ENCODE measurements at regions of chr19 and their contacts with region 1.

Region 1: GRCh38 chr19:13262450-13262849 is 112.2 kb downstream of the IER2 start:
- DNase-seq: no peak
- H3K4me3 ChIP-seq: no peak overlapping the region
- H3K27ac ChIP-seq: no peak overlapping the region
- H3K4me1 ChIP-seq: peaks cover 4 to 19% (median 6%) of the 10 kb centered on the region in 3 donors
- H3K27me3 ChIP-seq: peaks cover 0 to 3% (median 0%) of the 10 kb centered on the region in 4 donors
- CTCF ChIP-seq: peak in 5 of 6 experiments; percentile 40 to 69 (median 56)
- POLR2A ChIP-seq: no peak

Region 2: GRCh38 chr19:12974301-12975220 is 287.9 kb before region 1 on chr19:
- intact Hi-C with region 1: loop called (anchors 5 kb)
- DNase-seq: no peak
- H3K4me3 ChIP-seq: no peak overlapping the region
- H3K27ac ChIP-seq: no peak overlapping the region
- H3K4me1 ChIP-seq: peaks cover 0 to 9% (median 0%) of the 10 kb centered on the region in 3 donors
- H3K27me3 ChIP-seq: peaks cover 0 to 11% (median 0%) of the 10 kb centered on the region in 4 donors
- CTCF ChIP-seq: no peak
- POLR2A ChIP-seq: no peak

Region 3: GRCh38 chr19:13190781-13191540 is 71.5 kb before region 1 on chr19:
- intact Hi-C with region 1: loop called (anchors 5 kb)
- DNase-seq: no peak
- H3K4me3 ChIP-seq: no peak overlapping the region
- H3K27ac ChIP-seq: no peak overlapping the region
- H3K4me1 ChIP-seq: peaks cover 0 to 7% (median 5%) of the 10 kb centered on the region in 3 donors
- H3K27me3 ChIP-seq: no peaks in the 10 kb centered on the region
- CTCF ChIP-seq: no peak
- POLR2A ChIP-seq: no peak

Region 4: GRCh38 chr19:13212759-13213330 is 49.6 kb before region 1 on chr19:
- intact Hi-C with region 1: no loop called
- DNase-seq: no peak
- H3K4me3 ChIP-seq: no peak overlapping the region
- H3K27ac ChIP-seq: no peak overlapping the region
- H3K4me1 ChIP-seq: peaks cover 5 to 14% (median 6%) of the 10 kb centered on the region in 3 donors
- H3K27me3 ChIP-seq: no peaks in the 10 kb centered on the region
- CTCF ChIP-seq: peak in 5 of 6 experiments; percentile 31 to 57 (median 46)
- POLR2A ChIP-seq: no peak